Endothelial cell of umbilical vein (primary cell): ENCODE measurements at regions of chr10 and their contacts with region 1.

Region 1: GRCh38 chr10:72048450-72049124 is 39.8 kb downstream of the SPOCK2 start:
- DNase-seq: peak; percentile 94
- H3K4me3 ChIP-seq: no peak overlapping the region
- H3K27ac ChIP-seq: no peak overlapping the region
- H3K4me1 ChIP-seq: no peaks in the 10 kb centered on the region
- H3K27me3 ChIP-seq: no peaks in the 10 kb centered on the region
- CTCF ChIP-seq: peak; percentile 96 to 99
- POLR2A ChIP-seq: no peak

Region 2: GRCh38 chr10:71531485-71532446 is 516.8 kb before region 1 on chr10:
- CTCF ChIA-PET with region 1: no interaction called
- POLR2A ChIA-PET with region 1: no interaction called
- dilution Hi-C with region 1: no loop called
- intact Hi-C with region 1: no loop called
- DNase-seq: no peak
- H3K4me3 ChIP-seq: no peak overlapping the region
- H3K27ac ChIP-seq: no peak overlapping the region
- H3K4me1 ChIP-seq: no peaks in the 10 kb centered on the region
- H3K27me3 ChIP-seq: peaks cover 0 to 2% of the 10 kb centered on the region in 2 experiments
- CTCF ChIP-seq: no peak
- POLR2A ChIP-seq: no peak

Region 3: GRCh38 chr10:71957546-71958275 is 90.9 kb before region 1 on chr10:
- CTCF ChIA-PET with region 1: interaction called, 142 read pairs
- POLR2A ChIA-PET with region 1: no interaction called
- dilution Hi-C with region 1: no loop called
- intact Hi-C with region 1: loop called (anchors 1 kb)
- DNase-seq: no peak
- H3K4me3 ChIP-seq: no peak overlapping the region
- H3K27ac ChIP-seq: no peak overlapping the region
- H3K4me1 ChIP-seq: peaks cover 12% of the 10 kb centered on the region
- H3K27me3 ChIP-seq: peaks cover 4 to 6% of the 10 kb centered on the region in 2 experiments
- CTCF ChIP-seq: no peak
- POLR2A ChIP-seq: no peak

Region 4: GRCh38 chr10:71999360-72000072 is 49.1 kb before region 1 on chr10:
- CTCF ChIA-PET with region 1: interaction called, 16 read pairs
- POLR2A ChIA-PET with region 1: no interaction called
- dilution Hi-C with region 1: no loop called
- intact Hi-C with region 1: no loop called
- DNase-seq: peak; percentile 55
- H3K4me3 ChIP-seq: no peak overlapping the region
- H3K27ac ChIP-seq: no peak overlapping the region
- H3K4me1 ChIP-seq: peaks cover 12% of the 10 kb centered on the region
- H3K27me3 ChIP-seq: no peaks in the 10 kb centered on the region
- CTCF ChIP-seq: no peak
- POLR2A ChIP-seq: no peak

Region 5: DNA sequence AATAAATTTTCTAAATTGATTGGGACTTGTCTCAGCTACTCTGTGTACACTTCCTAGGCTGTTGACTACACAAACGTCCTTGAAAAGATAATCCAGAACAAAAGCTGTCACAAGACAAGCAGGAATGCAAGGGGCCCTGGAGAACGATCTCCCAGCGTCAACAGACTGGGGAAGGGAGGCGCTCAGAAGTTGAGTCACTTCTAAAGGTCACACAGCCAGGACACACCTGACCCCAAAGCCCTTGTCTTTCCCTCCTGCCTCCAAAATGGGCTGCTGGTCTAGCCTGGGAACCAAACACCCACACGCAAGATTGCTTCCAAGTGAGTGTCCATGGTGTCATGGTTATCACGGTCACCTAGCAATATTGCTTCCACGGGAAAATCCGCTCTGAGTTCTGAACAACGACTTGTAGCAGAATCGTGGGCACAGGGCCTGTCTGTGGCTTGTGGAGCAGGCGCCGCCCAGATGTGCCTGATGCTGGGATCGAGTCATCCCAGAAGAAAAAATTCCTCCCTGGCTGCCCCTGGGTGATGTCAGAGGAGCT is 10.1 kb before region 1 on chr10:
- CTCF ChIA-PET with region 1: interaction called, 36 read pairs
- POLR2A ChIA-PET with region 1: no interaction called
- dilution Hi-C with region 1: no loop called
- intact Hi-C with region 1: no loop called
- DNase-seq: no peak
- H3K4me3 ChIP-seq: no peak overlapping the region
- H3K27ac ChIP-seq: no peak overlapping the region
- H3K4me1 ChIP-seq: no peaks in the 10 kb centered on the region
- H3K27me3 ChIP-seq: no peaks in the 10 kb centered on the region
- CTCF ChIP-seq: no peak
- POLR2A ChIP-seq: no peak

Region 6: DNA sequence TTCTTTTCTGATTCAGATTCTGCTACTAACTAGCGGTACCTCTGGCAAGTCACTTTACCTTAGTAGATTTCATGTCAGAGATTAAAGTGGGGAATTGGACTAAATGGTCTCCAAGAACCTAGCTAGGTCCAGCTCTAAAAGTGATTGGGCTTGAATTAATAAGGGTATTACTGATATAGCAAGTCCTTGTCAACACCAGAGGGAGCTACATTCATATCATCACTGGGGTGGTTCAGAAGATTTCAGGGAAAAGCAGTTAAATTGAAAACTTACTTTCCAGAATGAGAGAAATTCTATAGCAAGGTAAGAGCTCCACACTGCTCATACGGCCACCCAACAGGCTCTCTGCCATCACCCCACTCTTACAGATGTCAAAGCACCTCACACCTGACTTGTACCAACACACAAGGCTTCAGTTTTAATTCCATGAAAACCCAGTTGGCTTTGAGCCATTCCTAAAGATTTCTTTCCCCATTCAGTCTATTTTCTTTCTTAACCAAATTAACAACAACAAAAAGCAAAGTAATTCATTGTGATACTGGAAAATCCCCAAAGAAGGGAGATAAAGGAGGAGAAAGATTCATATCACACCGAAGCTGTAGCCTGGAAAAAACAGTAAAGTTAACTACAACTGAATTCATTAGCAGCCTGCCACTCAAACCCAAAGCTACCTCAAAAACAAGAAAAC is 77.7 kb after region 1 on chr10:
- CTCF ChIA-PET with region 1: interaction called, 13 read pairs
- POLR2A ChIA-PET with region 1: no interaction called
- dilution Hi-C with region 1: no loop called
- intact Hi-C with region 1: no loop called
- DNase-seq: peak; percentile 65
- H3K4me3 ChIP-seq: no peak overlapping the region
- H3K27ac ChIP-seq: no peak overlapping the region
- H3K4me1 ChIP-seq: no peaks in the 10 kb centered on the region
- H3K27me3 ChIP-seq: no peaks in the 10 kb centered on the region
- CTCF ChIP-seq: peak; percentile 39
- POLR2A ChIP-seq: no peak

Region 7: DNA sequence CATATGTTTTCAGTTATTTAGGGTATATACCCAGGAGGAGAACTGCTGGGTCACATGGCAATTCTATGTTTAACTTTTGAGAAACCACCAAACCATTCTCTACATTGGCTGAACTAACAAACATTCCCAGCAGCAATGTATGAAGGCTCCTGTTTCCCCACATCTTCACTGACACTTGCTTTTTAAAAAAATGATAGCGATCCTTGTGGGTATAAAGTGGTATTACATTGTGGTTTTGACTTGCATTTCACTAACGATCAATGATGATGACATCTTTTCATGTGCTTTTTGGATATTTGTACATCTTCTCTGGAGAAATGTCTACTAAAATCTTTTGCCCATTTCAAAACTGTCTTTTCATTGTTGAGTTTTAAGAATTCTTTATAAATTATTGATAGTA is 116.0 kb after region 1 on chr10:
- CTCF ChIA-PET with region 1: no interaction called
- POLR2A ChIA-PET with region 1: no interaction called
- dilution Hi-C with region 1: no loop called
- intact Hi-C with region 1: no loop called
- DNase-seq: no peak
- H3K4me3 ChIP-seq: no peak overlapping the region
- H3K27ac ChIP-seq: no peak overlapping the region
- H3K4me1 ChIP-seq: no peaks in the 10 kb centered on the region
- H3K27me3 ChIP-seq: no peaks in the 10 kb centered on the region
- CTCF ChIP-seq: no peak
- POLR2A ChIP-seq: no peak

Region 8: DNA sequence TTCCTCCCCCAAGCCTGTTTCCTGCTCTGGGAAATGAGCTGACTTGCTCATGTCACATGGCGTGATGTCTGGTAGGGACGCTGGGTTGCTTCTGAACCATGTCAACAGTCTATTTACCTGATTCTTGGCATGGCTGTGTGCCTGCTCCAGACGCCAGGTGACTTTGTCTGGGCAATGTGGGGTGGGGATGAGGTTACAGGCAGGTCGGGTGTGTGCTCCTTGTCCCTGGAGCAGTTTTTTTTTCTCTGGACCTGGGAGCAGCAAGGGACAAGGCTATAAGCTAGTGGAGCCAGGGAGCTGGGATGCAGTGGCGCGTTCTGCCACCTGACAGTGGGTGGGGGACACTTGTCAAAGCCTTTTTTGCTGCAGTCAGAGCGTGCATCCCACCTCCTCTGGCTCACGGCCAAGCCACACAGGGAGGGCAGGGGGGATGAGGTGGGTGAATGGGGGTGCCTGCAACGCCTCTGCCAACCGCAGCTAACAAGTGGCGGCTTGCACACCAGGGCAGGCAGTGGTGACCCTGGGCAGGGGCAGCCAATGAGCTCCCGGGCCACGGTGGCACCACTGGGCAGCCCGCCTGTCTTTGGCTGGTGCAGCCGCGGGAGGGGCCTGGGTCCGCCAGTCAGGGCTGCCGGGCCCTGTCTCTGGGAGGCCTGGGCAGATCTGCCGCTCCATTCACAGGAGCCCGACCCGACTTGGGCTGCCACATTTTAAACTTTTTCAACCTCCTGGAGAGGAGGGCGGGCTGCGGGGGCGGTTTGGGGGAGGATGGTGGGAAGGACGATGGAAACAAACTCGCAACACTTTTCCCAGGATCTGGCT is 283.2 kb after region 1 on chr10:
- CTCF ChIA-PET with region 1: interaction called, 38 read pairs
- POLR2A ChIA-PET with region 1: no interaction called
- dilution Hi-C with region 1: no loop called
- intact Hi-C with region 1: loop called (anchors 1 kb)
- DNase-seq: peak; percentile 86
- H3K4me3 ChIP-seq: no peak overlapping the region
- H3K27ac ChIP-seq: peak overlapping the region; percentile 75
- H3K4me1 ChIP-seq: peaks cover 58% of the 10 kb centered on the region
- H3K27me3 ChIP-seq: no peaks in the 10 kb centered on the region
- CTCF ChIP-seq: peak; percentile 20 to 59
- POLR2A ChIP-seq: no peak